Astrocyte of the cerebellum (primary cell): ENCODE measurements at regions of chr6 and their contacts with region 1.

Region 1: GRCh38 chr6:56749632-56750151 is 107.0 kb upstream of the DST start:
- DNase-seq: peak; percentile 71
- H3K4me3 ChIP-seq: no peak overlapping the region
- CTCF ChIP-seq: no peak

Region 2: GRCh38 chr6:56796196-56796532 is 46.5 kb after region 1 on chr6:
- in situ Hi-C with region 1: loop called (anchors 5 kb)
- DNase-seq: no peak
- H3K4me3 ChIP-seq: no peak overlapping the region
- CTCF ChIP-seq: no peak